Dorsolateral prefrontal cortex (tissue), 120 donors: ENCODE measurements at regions of chr10 and their contacts with region 1.

Region 1: DNA sequence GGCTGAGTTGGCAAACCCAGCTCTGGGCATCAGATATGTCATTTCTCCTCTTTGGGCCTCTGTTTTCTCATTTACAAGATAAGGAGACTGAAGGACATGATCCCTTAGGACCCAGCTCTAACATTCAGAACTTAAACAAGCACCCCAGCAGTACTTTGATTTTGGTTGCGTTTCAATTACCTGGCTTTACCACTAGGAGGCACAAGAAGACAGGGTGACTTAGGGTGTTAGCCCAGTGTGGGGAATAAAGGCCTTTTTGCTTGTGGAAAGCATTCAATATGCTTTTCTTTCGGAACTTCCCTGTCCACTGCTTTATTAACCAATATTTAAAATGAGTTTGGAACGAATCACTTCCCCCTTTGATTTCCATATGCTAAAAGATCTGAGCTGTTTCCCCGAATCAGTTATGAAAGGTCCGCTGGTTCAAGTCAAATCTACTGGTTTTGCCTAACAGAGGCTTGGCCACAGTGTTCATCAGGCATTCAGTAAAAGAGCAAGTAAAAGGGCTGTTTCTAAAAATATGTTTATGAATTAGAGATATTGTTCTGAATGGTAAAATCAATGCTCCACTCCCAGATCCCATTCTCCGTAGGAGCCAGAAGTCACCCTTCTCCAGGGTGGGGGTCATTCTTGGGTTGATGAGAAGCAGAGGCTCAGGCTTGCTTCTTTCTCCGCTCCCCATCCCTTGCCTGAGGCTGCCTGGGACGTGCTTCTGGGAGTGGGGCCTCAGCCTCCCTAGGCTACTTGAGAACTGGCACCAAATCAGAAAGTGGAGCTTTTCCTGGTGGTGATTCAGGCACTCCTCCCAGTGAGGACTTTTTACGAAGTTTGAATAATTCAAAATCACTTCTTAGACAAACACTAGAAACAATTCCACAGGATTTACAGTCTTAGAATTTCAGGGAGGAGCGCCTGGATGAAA is 105.5 kb downstream of the MYOF start:
- DNase-seq: peak in 1 of 10 donors; percentile 7
- H3K4me3 ChIP-seq: peak overlapping the region in 1 of 59 donors; percentile 14
- H3K27ac ChIP-seq: peak overlapping the region in 24 of 59 donors; percentile 1 to 76 (median 38)
- H3K27me3 ChIP-seq: peaks cover 0 to 4% (median 0%) of the 10 kb centered on the region in 45 donors
- CTCF ChIP-seq: peak; percentile 79 to 99 (median 93)

Region 2: GRCh38 chr10:93138113-93138870 is 238.3 kb before region 1 on chr10:
- intact Hi-C with region 1: no loop called
- DNase-seq: no peak
- H3K4me3 ChIP-seq: no peak overlapping the region
- H3K27ac ChIP-seq: no peak overlapping the region
- H3K27me3 ChIP-seq: peaks cover 0 to 11% (median 0%) of the 10 kb centered on the region in 45 donors
- CTCF ChIP-seq: no peak

Region 3: GRCh38 chr10:93482145-93482834 is 105.7 kb after region 1 on chr10 and contains the start of gene MYOF:
- intact Hi-C with region 1: loop called (anchors 1 to 5 kb)
- DNase-seq: peak in 1 of 10 donors; percentile 41
- H3K4me3 ChIP-seq: peak within 1 kb of the TSS; percentile 10 to 74 (median 55)
- H3K27ac ChIP-seq: peak within 1 kb of the TSS in 52 of 59 donors; percentile 2 to 87 (median 70)
- H3K27me3 ChIP-seq: peaks cover 0 to 34% (median 7%) of the 10 kb centered on the region in 45 donors
- CTCF ChIP-seq: peak; percentile 35 to 77 (median 58)
- total RNA-seq, gene MYOF: 4.6 to 30.0 (median 12.5) TPM

Region 4: DNA sequence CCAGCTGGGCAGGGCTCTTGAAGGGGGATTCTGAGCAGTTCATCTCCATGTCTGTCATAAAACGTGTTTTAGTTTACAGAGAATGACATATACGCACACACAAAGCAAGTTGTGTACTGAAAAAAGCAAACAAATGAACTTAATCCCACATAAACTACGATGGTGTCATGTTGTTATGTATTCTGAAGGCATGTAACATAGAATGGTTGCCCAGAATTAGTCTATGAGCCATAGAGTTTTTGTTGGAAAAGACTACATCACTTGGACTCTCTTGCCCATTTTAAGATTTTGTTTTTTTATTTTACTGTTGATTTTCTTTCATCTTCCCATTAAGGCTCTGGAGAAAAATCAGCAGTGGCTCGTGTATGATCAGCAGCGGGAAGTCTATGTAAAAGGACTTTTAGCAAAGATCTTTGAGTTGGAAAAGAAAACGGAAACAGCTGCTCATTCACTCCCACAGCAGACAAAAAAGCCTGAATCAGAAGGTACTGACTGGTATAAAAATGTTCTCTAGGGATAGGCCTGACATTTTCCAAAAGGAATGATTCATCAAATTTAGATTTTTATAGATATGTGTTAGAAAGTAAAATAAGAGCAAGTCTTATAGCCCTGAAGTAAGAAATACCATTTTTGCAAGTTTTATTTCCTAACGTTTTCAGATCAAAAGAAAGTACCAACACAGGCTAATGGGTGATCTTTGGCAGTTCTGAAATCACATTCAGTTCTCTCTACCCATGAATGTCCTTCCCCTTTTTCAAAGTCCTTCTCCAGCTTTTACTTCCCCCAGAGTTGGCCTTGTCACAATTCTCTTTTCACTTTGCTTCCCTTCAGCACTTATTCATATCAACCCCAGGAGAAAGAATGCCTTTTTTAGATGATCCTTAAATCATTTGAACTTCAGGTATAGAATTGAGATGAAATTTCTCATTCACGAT is 138.7 kb after region 1 on chr10:
- intact Hi-C with region 1: loop called in 1 of 2 experiments (anchors 10 kb)
- DNase-seq: peak in 1 of 10 donors; percentile 18
- H3K4me3 ChIP-seq: peak overlapping the region in 1 of 59 donors; percentile 4
- H3K27ac ChIP-seq: peak overlapping the region in 53 of 59 donors; percentile 1 to 90 (median 67)
- H3K27me3 ChIP-seq: no peaks in the 10 kb centered on the region
- CTCF ChIP-seq: no peak

Region 5: DNA sequence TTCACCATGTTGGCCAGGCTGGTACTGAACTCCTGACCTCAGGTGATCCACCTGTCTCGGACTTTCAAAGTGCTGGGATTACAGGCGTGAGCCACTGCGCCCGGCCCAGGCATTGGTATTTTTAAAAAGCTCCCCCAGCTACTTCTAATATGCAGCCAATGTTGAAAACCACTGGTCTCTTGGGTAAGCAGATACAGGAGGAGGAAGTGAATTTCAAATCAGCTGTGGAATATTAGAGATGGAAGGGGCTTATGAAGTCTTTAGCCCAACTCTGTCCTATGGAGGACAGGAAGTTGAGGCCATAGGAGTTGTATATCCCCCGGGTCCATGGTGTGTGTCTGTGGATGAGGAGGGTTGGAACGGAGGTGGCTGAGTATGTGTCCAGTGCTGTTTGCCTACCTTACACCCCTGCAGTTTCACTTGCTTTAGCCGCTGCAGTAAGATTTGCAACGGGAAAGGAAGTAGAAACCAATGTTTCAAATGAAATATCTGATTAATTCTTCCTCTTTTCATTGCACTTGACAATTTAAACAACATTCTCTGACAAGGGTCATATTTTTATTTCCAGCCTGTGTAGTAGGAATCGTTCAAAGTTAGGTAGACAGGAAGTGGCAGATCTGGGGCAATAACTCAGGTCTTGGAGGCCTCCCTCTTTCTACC is 239.1 kb after region 1 on chr10:
- intact Hi-C with region 1: no loop called
- DNase-seq: no peak
- H3K4me3 ChIP-seq: no peak overlapping the region
- H3K27ac ChIP-seq: no peak overlapping the region
- H3K27me3 ChIP-seq: peaks cover 0 to 4% (median 0%) of the 10 kb centered on the region in 45 donors
- CTCF ChIP-seq: no peak

Region 6: DNA sequence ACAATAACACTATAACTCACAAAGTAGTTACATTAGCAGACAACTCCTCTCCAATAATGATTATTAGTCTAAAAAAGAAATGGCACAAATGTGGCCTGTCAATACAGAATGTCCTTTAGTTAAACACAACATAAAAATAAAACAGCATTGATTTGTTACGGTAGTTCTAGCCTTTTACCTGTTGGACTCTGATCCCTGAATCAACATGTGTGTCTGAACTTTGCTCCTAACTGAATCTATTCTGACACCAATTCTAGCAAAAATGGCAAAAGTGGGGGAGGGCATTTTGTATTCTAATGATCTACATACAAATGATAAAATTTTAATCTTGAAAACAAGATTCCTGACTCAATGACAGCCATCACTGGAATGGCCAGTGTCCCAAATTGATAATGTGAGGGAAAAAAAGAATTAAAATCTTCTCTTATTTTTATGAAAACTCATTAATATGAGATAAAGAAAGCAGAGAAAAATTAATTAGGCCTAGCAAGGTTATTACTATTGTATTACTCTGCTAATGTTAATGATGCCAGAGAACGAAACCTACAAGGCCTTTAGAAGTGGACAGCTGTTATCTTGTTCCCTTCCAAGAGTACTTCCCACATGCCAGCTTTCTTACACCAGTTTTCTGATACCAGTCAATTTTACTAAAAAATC is 295.5 kb after region 1 on chr10:
- intact Hi-C with region 1: loop called in 1 of 2 experiments (anchors 10 kb)
- DNase-seq: no peak
- H3K4me3 ChIP-seq: no peak overlapping the region
- H3K27ac ChIP-seq: no peak overlapping the region
- H3K27me3 ChIP-seq: no peaks in the 10 kb centered on the region
- CTCF ChIP-seq: no peak

Region 7: DNA sequence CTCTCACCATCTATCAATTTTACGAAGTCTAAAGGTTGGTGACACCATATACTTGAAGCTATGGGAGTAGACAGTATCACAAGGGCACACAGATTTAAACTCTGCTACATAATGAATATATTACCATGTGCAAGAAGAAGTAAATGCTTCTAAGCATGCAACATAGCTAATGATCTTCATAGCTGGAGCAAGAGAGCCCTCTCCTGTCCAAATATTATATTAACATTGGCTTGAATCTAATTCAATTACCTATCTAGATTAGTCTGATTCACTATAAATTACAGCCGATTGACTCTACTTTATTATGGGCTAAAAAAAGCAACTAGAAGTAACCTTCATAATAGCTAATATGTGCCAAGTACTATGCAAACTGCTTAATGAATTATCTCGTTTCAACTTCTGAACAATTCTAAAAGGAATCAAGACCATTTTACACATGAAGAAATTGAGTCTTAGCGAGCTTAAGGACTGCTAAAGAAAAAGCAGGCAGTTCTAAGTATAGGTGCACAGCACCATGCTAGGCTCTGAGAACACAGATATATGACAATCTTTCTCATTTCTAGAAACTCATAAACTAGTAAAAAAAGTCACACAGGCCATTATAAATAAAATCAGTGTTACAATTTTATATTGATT is 303.9 kb after region 1 on chr10:
- intact Hi-C with region 1: loop called (anchors 10 kb)
- DNase-seq: no peak
- H3K4me3 ChIP-seq: no peak overlapping the region
- H3K27ac ChIP-seq: no peak overlapping the region
- H3K27me3 ChIP-seq: no peaks in the 10 kb centered on the region
- CTCF ChIP-seq: peak in 53 of 56 donors; percentile 28 to 71 (median 51)